Colonic mucosa (tissue), 4 donors: ENCODE measurements at regions of chr12 and their contacts with region 1.

Region 1: GRCh38 chr12:54191550-54192022 is 2.8 kb upstream of the SMUG1 start:
- DNase-seq: peak; percentile 77
- H3K4me3 ChIP-seq: no peak overlapping the region
- H3K27ac ChIP-seq: no peak overlapping the region
- H3K4me1 ChIP-seq: peaks cover 4% of the 10 kb centered on the region
- H3K27me3 ChIP-seq: peaks cover 45% of the 10 kb centered on the region
- CTCF ChIP-seq: peak; percentile 64

Region 2: DNA sequence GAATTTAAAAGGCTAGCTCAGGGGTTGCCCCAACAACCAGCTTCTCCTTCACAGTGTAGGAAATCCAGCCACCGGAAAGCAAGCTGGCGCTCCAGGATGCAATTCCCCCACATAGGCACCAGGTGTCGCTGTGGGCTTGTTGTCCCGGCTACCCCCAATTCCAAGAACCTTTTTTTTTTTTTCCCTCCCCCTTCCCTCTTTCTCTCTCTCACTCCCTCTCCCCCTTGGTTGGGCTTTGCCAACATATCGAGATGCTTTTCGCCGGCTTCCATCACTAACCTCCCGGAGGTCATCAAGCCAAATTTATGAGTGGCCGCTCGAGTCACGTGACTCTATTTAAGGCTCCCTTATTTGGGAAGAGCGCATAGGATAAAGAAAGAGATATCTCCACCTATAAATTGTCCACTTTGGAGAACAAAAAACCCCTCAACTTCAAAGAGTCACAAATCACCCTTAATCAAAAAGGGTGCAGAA is 158.9 kb before region 1 on chr12 and contains the start of gene HOXC5:
- intact Hi-C with region 1: loop called (anchors 5 kb)
- DNase-seq: peak; percentile 65
- H3K4me3 ChIP-seq: peak within 1 kb of the TSS; percentile 14
- H3K27ac ChIP-seq: no peak within 1 kb of the TSS
- H3K4me1 ChIP-seq: no peaks in the 10 kb centered on the region
- H3K27me3 ChIP-seq: peaks cover 97% of the 10 kb centered on the region
- CTCF ChIP-seq: peak; percentile 88
- total RNA-seq, gene HOXC5: not detected

Region 3: DNA sequence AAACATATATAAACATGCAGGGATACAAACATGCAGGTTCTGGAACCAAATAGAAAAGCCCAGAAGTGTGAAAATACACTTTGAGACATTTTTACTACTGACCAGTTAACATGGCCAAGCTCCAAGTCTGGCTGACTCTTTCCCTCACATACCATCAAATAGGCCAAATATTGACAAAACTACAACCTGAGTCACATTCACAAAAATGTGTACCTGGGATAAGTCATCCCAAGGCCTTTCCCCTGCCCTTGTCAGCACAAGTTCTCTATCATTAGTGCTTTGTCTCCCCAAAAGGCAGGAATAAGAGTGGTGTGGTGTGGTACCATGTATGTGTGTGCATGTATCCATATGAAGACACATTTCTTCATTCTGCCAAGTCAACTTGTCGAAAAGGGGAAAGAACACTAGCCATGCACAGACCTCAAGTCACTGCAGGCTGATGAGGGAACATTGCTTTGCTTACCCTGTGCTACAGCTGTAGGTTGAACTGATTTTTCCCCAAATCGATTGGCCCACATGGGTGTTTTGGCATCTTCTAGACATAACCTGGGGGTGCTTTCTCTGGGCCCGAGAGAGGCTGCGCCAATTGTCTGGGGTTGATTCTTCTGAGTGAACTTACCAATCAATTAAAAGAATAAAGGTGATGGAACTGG is 123.0 kb before region 1 on chr12:
- intact Hi-C with region 1: no loop called
- DNase-seq: no peak
- H3K4me3 ChIP-seq: no peak overlapping the region
- H3K27ac ChIP-seq: no peak overlapping the region
- H3K4me1 ChIP-seq: no peaks in the 10 kb centered on the region
- H3K27me3 ChIP-seq: no peaks in the 10 kb centered on the region
- CTCF ChIP-seq: no peak